Naive thymus-derived CD4-positive, alpha-beta T cell (primary cell): ENCODE measurements at regions of chr20 and their contacts with region 1.

Region 1: DNA sequence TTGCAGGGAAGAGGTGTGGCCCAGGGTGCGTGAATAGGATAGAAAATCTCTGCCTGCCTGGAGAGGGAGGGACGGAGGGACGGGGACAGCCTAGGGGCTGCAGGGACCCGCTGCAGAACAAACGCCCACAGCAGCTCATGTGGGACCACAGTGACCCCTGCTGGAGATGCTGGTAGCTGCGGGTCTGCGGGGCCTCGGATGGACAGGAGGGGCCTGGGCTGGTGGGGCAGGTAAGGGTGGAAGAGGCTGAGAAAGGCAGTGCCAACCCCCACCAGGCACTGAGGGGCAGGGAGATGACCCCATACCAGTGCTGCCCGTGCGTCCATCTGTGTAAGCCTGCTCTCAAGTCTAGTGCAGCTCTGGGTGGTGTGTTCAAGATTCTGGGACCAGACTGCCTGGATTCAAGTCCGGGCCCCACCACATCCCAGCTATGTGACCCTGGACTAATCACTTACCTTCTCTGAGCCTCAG is 39.4 kb downstream of the KIAA1755 start:
- DNase-seq: peak in 8 of 9 donors; percentile 16 to 77 (median 50)
- ATAC-seq: peak; percentile 81
- H3K4me3 ChIP-seq: no peak overlapping the region
- H3K4me3 Mint-ChIP-seq: peak overlapping the region in 2 of 10 donors; percentile 22 to 51
- H3K27ac ChIP-seq: no peak overlapping the region
- H3K27ac Mint-ChIP-seq: no peak overlapping the region
- H3K4me1 ChIP-seq: no peaks in the 10 kb centered on the region
- H3K4me1 Mint-ChIP-seq: peaks cover 0 to 7% (median 0%) of the 10 kb centered on the region in 7 donors
- H3K27me3 ChIP-seq: no peaks in the 10 kb centered on the region
- H3K27me3 Mint-ChIP-seq: peaks cover 0 to 12% (median 3%) of the 10 kb centered on the region in 5 donors

Region 2: DNA sequence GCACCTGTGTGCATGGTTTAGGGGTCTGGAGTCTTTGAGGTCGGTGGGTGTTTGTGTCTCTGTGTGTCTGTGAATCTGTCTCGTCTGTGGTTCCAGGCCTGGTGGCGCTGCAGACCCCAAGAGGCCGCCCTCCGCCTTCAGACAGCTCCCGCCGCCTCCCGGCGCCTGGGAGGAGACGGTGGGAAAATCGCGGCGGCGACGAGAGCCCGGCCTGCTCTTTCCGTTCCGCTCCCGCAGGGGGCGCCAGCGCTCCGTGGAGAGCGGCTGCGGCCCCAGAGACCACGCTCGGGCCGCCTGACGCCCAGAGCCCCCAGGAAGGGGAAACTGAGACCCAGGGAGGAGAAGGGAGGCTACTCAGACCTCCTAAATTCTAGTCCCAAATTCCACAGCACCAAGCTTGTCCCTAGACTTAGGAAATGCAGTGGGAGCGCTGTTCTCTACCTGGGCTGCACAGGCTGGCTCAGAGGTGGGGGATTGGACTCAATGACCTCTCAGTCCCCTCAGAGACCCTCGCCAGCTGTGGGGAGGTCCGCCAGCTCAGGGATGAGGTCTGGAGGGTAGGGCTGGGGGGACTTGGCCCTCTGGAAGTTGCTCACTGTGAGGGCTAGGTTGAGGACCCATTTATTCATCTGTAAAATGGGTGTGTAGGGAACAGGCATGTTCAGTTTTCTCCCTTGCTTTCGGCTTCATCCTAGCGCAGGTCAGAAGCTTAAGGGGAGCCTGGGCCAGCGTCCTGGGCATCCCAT is 656.6 kb before region 1 on chr20:
- CTCF ChIA-PET with region 1: no interaction called
- POLR2A ChIA-PET with region 1: no interaction called
- intact Hi-C with region 1: loop called in 1 of 2 experiments (anchors 1 kb)
- DNase-seq: peak in 7 of 9 donors; percentile 9 to 63 (median 26)
- ATAC-seq: peak; percentile 52
- H3K4me3 ChIP-seq: no peak overlapping the region
- H3K4me3 Mint-ChIP-seq: no peak overlapping the region
- H3K27ac ChIP-seq: no peak overlapping the region
- H3K27ac Mint-ChIP-seq: no peak overlapping the region
- H3K4me1 ChIP-seq: no peaks in the 10 kb centered on the region
- H3K4me1 Mint-ChIP-seq: peaks cover 0 to 9% (median 3%) of the 10 kb centered on the region in 7 donors
- H3K27me3 ChIP-seq: no peaks in the 10 kb centered on the region
- H3K27me3 Mint-ChIP-seq: peaks cover 41 to 48% (median 43%) of the 10 kb centered on the region in 5 donors

Region 3: GRCh38 chr20:37651932-37652331 is 569.2 kb before region 1 on chr20:
- CTCF ChIA-PET with region 1: no interaction called
- POLR2A ChIA-PET with region 1: no interaction called
- intact Hi-C with region 1: loop called in 1 of 2 experiments (anchors 5 kb)
- DNase-seq: peak in 3 of 9 donors; percentile 2 to 24 (median 3)
- ATAC-seq: peak; percentile 67
- H3K4me3 ChIP-seq: no peak overlapping the region
- H3K4me3 Mint-ChIP-seq: no peak overlapping the region
- H3K27ac ChIP-seq: no peak overlapping the region
- H3K27ac Mint-ChIP-seq: no peak overlapping the region
- H3K4me1 ChIP-seq: no peaks in the 10 kb centered on the region
- H3K4me1 Mint-ChIP-seq: no peaks in the 10 kb centered on the region
- H3K27me3 ChIP-seq: no peaks in the 10 kb centered on the region
- H3K27me3 Mint-ChIP-seq: peaks cover 9 to 24% (median 20%) of the 10 kb centered on the region in 5 donors

Region 4: GRCh38 chr20:38057351-38057972 is 163.7 kb before region 1 on chr20:
- CTCF ChIA-PET with region 1: interaction called, 14 read pairs
- POLR2A ChIA-PET with region 1: no interaction called
- intact Hi-C with region 1: loop called (anchors 1 kb)
- DNase-seq: peak; percentile 33 to 69 (median 60)
- ATAC-seq: peak; percentile 98
- H3K4me3 ChIP-seq: no peak overlapping the region
- H3K4me3 Mint-ChIP-seq: peak overlapping the region in 1 of 10 donors; percentile 52
- H3K27ac ChIP-seq: no peak overlapping the region
- H3K27ac Mint-ChIP-seq: peak overlapping the region in 8 of 9 donors; percentile 14 to 82 (median 30)
- H3K4me1 ChIP-seq: no peaks in the 10 kb centered on the region
- H3K4me1 Mint-ChIP-seq: peaks cover 5 to 37% (median 31%) of the 10 kb centered on the region in 7 donors
- H3K27me3 ChIP-seq: no peaks in the 10 kb centered on the region
- H3K27me3 Mint-ChIP-seq: no peaks in the 10 kb centered on the region

Region 5: DNA sequence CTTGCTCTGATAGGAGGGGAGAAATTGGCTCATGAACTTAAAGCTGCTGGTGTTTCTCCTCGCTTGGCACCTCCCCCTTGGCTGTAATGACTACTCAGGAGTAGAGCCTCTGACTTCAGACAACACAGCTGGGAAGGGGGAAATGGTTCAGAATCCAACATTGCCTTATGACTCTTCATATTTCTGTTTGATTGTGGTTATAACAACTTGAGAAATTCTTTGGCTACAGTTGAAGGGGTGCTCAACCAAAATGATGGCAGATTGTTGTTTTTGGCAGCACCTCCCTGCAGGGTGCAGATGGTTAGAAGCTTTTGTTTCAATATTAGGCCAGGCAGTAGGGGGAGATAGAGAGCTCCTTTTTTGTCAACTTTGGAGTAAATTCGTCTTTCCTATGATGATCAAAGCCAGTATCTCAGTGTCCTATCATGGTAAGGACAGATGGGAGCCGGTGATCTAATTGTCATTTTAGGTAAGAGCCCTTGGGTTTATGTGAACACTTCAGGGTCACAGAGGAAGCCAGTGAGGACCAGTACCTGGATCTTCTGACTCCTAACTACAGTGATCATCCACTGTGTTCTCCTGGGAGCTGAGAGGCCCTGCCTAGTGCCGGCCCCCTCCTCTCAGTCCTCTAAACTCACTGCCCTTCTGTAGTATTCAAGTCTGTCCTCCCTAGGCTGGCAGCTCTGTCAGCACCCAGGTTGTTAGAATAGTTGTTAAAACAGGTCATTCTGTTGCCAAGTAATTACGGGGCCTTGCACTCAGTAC is 147.7 kb before region 1 on chr20:
- CTCF ChIA-PET with region 1: interaction called, 4 read pairs
- POLR2A ChIA-PET with region 1: no interaction called
- intact Hi-C with region 1: loop called (anchors 1 to 5 kb)
- DNase-seq: peak in 6 of 9 donors; percentile 7 to 39 (median 12)
- ATAC-seq: peak; percentile 78
- H3K4me3 ChIP-seq: no peak overlapping the region
- H3K4me3 Mint-ChIP-seq: no peak overlapping the region
- H3K27ac ChIP-seq: no peak overlapping the region
- H3K27ac Mint-ChIP-seq: peak overlapping the region in 6 of 9 donors; percentile 15 to 73 (median 44)
- H3K4me1 ChIP-seq: no peaks in the 10 kb centered on the region
- H3K4me1 Mint-ChIP-seq: peaks cover 9 to 34% (median 18%) of the 10 kb centered on the region in 7 donors
- H3K27me3 ChIP-seq: no peaks in the 10 kb centered on the region
- H3K27me3 Mint-ChIP-seq: no peaks in the 10 kb centered on the region

Region 6: DNA sequence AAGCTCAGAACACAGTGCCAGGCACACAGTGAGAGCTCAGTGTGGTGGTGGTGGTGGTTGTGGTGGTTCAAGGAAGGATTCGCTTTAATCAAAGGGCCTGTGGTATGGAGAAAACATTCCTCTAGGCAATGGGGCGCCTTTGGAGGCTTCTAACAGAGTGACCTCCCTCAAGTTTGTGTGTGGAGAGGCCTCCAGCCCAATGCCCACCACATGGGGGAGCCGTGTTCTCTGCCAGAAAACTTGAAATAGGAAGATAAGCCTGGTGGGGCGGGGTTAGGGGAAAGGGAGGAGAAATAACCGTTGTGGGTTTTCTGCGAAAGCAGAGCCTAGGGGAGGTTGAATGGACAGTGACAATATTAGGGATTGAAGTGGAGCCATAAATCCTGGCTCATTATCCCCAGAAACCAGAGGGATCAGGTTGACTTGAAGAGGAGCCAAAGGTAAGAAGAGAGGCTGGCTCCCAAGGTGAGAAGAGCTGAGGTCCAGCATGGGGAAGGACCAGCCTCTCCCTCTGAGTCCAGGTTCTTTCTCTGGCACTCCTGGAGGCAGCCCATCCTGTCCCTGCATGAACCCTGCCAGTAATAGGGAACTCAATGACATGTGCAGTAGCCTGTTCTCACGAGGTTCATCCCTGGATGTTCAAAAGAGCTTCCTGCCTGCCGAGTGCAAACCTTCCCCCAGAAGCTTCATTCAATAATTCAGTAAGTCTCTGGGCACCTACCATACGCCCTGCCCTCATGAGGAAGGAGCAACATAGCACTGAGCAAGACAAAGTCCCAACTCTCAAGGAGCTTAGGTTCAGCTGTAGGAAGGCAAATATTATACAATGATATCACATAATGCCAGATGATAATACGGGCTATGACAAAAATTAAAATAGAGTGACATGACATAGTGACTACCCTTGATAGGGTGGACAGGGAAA is 107.5 kb before region 1 on chr20:
- CTCF ChIA-PET with region 1: no interaction called
- POLR2A ChIA-PET with region 1: no interaction called
- intact Hi-C with region 1: loop called in 1 of 2 experiments (anchors 1 kb)
- DNase-seq: no peak
- ATAC-seq: peak; percentile 61
- H3K4me3 ChIP-seq: no peak overlapping the region
- H3K4me3 Mint-ChIP-seq: no peak overlapping the region
- H3K27ac ChIP-seq: no peak overlapping the region
- H3K27ac Mint-ChIP-seq: peak overlapping the region in 1 of 9 donors; percentile 21
- H3K4me1 ChIP-seq: no peaks in the 10 kb centered on the region
- H3K4me1 Mint-ChIP-seq: peaks cover 0 to 7% (median 0%) of the 10 kb centered on the region in 7 donors
- H3K27me3 ChIP-seq: no peaks in the 10 kb centered on the region
- H3K27me3 Mint-ChIP-seq: peaks cover 0 to 22% (median 0%) of the 10 kb centered on the region in 5 donors